ENCODE measurements at regions of chr9 and their contacts with region 1.

Region 1: DNA sequence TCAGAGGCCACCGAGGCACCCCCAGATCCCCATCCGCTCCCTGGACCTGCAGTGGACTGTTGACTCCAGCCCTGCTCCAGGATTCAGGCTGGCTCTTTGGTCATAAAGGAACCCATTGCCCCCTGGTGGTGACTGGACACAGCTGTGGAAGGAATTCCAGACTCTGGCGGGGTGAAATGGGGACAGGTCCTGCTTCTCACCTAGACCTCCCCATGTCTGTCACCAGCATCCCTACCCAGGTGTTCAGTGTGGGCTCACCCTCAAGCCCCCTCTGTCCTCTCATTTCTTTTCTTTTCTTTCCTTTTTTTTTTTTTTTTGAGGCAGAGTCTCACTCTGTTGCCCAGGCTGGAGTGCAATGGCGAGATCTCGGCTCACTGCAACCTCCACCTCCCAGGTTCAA is 25.5 kb upstream of the STXBP1 start:
- DNase-seq: peak; percentile 67 to 85 (median 81)
- H3K4me3 ChIP-seq: no peak overlapping the region
- H3K4me3 Mint-ChIP-seq: peak overlapping the region in 1 of 2 donors; percentile 56
- H3K27ac ChIP-seq: peak overlapping the region in 1 of 2 donors; percentile 72
- H3K27ac Mint-ChIP-seq: peak overlapping the region in 4 of 7 donors; percentile 76 to 91 (median 85)
- H3K4me1 ChIP-seq: peaks cover 44 to 45% of the 10 kb centered on the region in 2 donors
- H3K4me1 Mint-ChIP-seq: peaks cover 41% of the 10 kb centered on the region
- H3K27me3 ChIP-seq: no peaks in the 10 kb centered on the region
- H3K27me3 Mint-ChIP-seq: peaks cover 4 to 15% (median 8%) of the 10 kb centered on the region in 3 donors
- CTCF ChIP-seq: peak; percentile 83

Region 2: GRCh38 chr9:127493592-127494301 is 92.8 kb before region 1 on chr9:
- intact Hi-C with region 1: no loop called
- DNase-seq: no peak
- H3K4me3 ChIP-seq: no peak overlapping the region
- H3K4me3 Mint-ChIP-seq: no peak overlapping the region
- H3K27ac ChIP-seq: no peak overlapping the region
- H3K27ac Mint-ChIP-seq: no peak overlapping the region
- H3K4me1 ChIP-seq: no peaks in the 10 kb centered on the region
- H3K4me1 Mint-ChIP-seq: no peaks in the 10 kb centered on the region
- H3K27me3 ChIP-seq: no peaks in the 10 kb centered on the region
- H3K27me3 Mint-ChIP-seq: no peaks in the 10 kb centered on the region
- CTCF ChIP-seq: no peak

Region 3: DNA sequence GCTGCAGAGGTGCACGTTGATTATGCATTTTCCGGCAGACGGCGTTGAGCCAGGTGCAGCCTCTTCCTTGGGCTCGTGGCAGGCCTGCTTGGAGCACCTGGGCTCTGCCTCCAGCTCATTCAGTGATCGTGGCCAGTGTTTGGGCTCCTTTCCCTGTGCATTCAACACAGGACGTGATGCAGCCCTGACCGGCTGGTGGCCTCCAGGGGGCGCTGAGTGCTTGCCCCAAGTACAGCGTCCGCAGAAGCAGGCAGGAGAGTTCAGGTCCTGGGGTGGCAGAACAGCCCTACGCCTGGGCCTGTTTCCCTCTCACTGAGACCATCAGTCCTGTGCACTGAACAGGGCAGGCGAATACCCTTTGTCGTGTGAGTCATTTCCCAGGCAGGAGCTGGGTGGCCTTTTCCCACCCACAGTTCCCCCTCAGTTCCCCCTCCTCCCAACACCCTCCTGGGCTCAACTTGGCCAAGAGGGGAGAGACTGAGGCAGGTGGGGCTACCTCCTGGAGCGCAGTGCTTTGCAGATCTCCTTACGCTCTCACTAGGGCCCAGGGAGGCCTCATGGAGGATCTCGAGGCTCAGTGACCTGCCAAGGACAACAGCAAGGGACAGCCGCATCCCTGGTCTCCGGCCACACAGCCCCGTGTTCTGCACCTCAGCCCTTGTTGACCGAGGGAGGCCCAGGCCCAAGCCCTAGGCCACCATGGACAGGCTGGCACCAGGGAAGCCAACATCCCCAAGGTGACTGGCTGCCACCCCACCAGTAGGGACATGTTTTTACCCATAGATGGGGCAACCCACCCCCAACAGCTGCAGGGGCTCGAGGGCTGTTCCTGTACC is 82.4 kb before region 1 on chr9:
- intact Hi-C with region 1: loop called (anchors 2 to 5 kb)
- DNase-seq: peak; percentile 73 to 80 (median 79)
- H3K4me3 ChIP-seq: no peak overlapping the region
- H3K4me3 Mint-ChIP-seq: no peak overlapping the region
- H3K27ac ChIP-seq: peak overlapping the region; percentile 2 to 50
- H3K27ac Mint-ChIP-seq: peak overlapping the region in 5 of 7 donors; percentile 5 to 48 (median 46)
- H3K4me1 ChIP-seq: no peaks in the 10 kb centered on the region
- H3K4me1 Mint-ChIP-seq: no peaks in the 10 kb centered on the region
- H3K27me3 ChIP-seq: no peaks in the 10 kb centered on the region
- H3K27me3 Mint-ChIP-seq: peaks cover 0 to 4% (median 2%) of the 10 kb centered on the region in 3 donors
- CTCF ChIP-seq: peak; percentile 90

Region 4: DNA sequence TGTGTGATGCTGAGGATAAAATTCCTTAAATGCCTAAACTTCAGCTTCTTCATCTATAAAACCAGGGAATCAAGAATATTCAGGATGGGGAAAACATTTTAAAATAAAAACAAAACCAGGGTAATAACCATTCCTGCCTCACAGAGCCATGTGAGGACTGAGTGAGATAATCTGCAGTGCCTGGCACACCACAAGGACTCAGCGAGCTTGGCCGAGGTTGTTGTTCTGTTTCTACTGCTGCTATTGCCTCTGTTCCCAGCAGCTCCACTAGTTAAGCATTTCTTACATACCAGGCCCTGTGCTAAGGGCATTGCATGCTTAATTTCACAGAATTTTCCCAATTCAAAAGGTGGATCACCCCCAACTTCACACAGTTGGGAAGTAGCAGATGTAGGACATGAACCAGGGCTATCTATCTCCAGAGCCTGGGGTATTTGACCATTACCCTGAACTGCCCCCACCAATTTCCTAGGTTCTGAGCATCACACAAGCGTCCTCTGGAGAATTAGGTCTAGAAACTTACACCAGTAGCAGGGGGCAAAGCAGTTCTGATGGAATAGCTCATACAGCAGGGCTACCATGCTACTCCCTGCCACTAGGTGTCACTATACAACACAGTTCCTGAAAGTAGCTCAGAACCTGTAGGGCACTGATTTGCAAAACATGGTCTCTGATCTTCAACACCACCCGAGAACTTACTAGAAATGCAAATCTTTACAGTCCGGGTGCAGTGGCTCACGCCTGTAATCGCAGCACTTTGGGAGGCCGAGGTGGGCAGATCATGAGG is 60.9 kb before region 1 on chr9:
- intact Hi-C with region 1: loop called in 1 of 2 experiments (anchors 5 kb)
- DNase-seq: peak; percentile 53 to 69 (median 65)
- H3K4me3 ChIP-seq: no peak overlapping the region
- H3K4me3 Mint-ChIP-seq: no peak overlapping the region
- H3K27ac ChIP-seq: no peak overlapping the region
- H3K27ac Mint-ChIP-seq: peak overlapping the region in 4 of 7 donors; percentile 25 to 80 (median 44)
- H3K4me1 ChIP-seq: peaks cover 16 to 25% of the 10 kb centered on the region in 2 donors
- H3K4me1 Mint-ChIP-seq: peaks cover 15% of the 10 kb centered on the region
- H3K27me3 ChIP-seq: no peaks in the 10 kb centered on the region
- H3K27me3 Mint-ChIP-seq: peaks cover 2 to 3% (median 3%) of the 10 kb centered on the region in 3 donors
- CTCF ChIP-seq: peak; percentile 83

Region 5: GRCh38 chr9:127568971-127569885 is 17.3 kb before region 1 on chr9:
- intact Hi-C with region 1: loop called (anchors 2 kb)
- DNase-seq: peak; percentile 73 to 83 (median 74)
- H3K4me3 ChIP-seq: peak overlapping the region; percentile 72 to 94 (median 74)
- H3K4me3 Mint-ChIP-seq: peak overlapping the region; percentile 81 to 90
- H3K27ac ChIP-seq: peak overlapping the region; percentile 83 to 93
- H3K27ac Mint-ChIP-seq: peak overlapping the region; percentile 90 to 97 (median 96)
- H3K4me1 ChIP-seq: peaks cover 70 to 84% of the 10 kb centered on the region in 2 donors
- H3K4me1 Mint-ChIP-seq: peaks cover 74% of the 10 kb centered on the region
- H3K27me3 ChIP-seq: no peaks in the 10 kb centered on the region
- H3K27me3 Mint-ChIP-seq: no peaks in the 10 kb centered on the region
- CTCF ChIP-seq: no peak